Stomach (tissue), 19 donors: ENCODE measurements at regions of chr7 and their contacts with region 1.

Region 1: GRCh38 chr7:135645296-135645904 is 16.9 kb upstream of the STMP1 start:
- DNase-seq: peak in 1 of 2 donors; percentile 61
- H3K4me3 ChIP-seq: no peak overlapping the region
- H3K27ac ChIP-seq: no peak overlapping the region
- H3K4me1 ChIP-seq: no peaks in the 10 kb centered on the region
- H3K27me3 ChIP-seq: no peaks in the 10 kb centered on the region
- CTCF ChIP-seq: peak in 4 of 7 experiments; percentile 63 to 70 (median 67)
- EP300 ChIP-seq: no peak
- POLR2A ChIP-seq: no peak

Region 2: DNA sequence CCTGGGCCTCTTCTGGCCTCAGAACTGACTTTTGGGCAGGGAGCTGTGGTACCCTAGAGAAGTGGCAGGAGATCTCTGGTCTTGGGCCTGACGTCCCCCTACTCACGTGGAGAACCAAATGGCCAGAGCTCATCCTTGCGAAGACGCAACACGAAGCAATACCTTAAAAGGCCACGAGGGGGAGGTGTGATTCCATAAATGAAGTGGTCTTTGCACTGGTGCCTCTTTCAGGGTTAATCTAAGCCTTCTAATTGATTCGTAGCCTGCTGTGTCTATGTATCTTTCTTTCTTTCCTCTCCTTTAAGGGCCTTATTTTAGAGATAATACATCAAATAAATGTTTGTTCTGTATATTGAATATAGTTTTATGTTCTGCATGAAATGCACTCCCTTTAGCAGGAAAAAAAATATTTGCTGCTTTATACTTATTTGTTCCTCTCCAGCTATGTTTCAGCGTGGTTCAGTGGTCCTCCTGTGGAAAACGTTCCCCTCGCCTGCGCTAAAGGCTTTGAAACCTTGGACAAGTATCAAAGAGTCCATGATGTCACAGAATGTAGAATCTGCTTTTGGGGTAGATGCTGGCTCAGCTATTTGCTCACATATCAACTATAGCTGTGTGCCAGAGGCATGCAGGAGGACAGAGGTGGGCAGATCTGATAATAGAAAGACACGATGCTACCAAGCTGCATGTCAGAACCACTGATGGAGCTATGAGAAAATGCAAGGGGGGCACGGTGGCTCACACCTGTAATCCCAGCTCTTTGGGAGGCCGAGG is 370.7 kb before region 1 on chr7:
- intact Hi-C with region 1: loop called (anchors 10 kb)
- DNase-seq: peak; percentile 72 to 85
- H3K4me3 ChIP-seq: no peak overlapping the region
- H3K27ac ChIP-seq: no peak overlapping the region
- H3K4me1 ChIP-seq: peaks cover 0 to 6% (median 3%) of the 10 kb centered on the region in 4 donors
- H3K27me3 ChIP-seq: peaks cover 0 to 13% (median 0%) of the 10 kb centered on the region in 3 donors
- CTCF ChIP-seq: peak in 5 of 7 experiments; percentile 48 to 89 (median 87)
- EP300 ChIP-seq: no peak
- POLR2A ChIP-seq: no peak

Region 3: GRCh38 chr7:135480966-135481597 is 164.3 kb before region 1 on chr7:
- intact Hi-C with region 1: no loop called
- DNase-seq: no peak
- H3K4me3 ChIP-seq: no peak overlapping the region
- H3K27ac ChIP-seq: no peak overlapping the region
- H3K4me1 ChIP-seq: peaks cover 0 to 19% (median 3%) of the 10 kb centered on the region in 4 donors
- H3K27me3 ChIP-seq: no peaks in the 10 kb centered on the region
- CTCF ChIP-seq: no peak
- EP300 ChIP-seq: no peak
- POLR2A ChIP-seq: no peak